SK-N-SH (cell line): ENCODE measurements at regions of chr11 and their contacts with region 1.

Region 1: DNA sequence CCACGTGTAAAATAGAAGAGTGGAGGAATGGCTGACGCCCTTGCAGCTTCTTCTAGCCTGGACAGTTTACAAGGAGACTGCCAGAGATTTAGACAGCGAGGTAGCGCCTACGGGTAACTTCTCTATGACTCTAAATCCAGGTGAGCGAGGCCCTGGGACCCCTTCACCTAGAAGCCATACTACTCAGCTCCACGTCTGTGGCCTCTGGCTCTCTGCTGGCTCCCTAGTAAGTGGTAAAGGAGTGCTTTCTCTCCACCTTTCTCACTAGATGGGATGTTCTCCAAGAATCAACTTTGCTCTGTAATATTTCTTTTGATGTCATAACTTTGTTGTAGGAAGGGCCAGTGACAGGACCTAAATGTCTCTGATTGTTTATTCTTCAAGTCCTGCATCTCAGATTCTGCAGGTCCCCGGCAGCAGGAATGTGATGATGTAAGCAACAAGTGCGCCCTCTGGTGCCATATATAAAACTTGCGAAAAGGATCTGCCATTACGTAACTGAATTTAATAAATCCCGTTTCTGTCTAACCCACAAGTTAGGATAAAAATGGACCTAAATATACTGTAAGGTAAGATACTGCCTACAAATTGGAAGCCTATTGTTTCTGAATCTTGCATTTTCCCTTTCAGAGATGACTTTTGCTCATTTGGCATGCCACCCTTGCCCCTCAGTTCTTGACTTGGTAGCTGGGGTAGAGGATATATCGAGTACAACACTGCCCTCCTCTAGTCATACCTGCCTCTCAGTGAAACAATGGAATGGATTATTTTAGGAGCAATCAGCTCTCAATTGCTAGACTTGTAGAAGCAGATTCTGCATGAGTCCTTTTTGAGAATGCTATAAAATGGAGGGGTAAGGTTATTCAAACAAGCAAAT is 11.0 kb upstream of the PTPN5 start:
- DNase-seq: peak; percentile 62
- H3K4me3 ChIP-seq: no peak overlapping the region
- H3K27ac ChIP-seq: no peak overlapping the region
- H3K4me1 ChIP-seq: 0 out of 4 replicates have a peak, but pooled peaks cover 0 to 2% of the 10 kb centered on the region in 2 experiments
- H3K27me3 ChIP-seq: peaks cover 4% of the 10 kb centered on the region; the same call in 1 of the 2 replicates
- CTCF ChIP-seq: peak; percentile 78
- EP300 ChIP-seq: no peak
- RAD21 ChIP-seq: peak; percentile 76

Region 2: DNA sequence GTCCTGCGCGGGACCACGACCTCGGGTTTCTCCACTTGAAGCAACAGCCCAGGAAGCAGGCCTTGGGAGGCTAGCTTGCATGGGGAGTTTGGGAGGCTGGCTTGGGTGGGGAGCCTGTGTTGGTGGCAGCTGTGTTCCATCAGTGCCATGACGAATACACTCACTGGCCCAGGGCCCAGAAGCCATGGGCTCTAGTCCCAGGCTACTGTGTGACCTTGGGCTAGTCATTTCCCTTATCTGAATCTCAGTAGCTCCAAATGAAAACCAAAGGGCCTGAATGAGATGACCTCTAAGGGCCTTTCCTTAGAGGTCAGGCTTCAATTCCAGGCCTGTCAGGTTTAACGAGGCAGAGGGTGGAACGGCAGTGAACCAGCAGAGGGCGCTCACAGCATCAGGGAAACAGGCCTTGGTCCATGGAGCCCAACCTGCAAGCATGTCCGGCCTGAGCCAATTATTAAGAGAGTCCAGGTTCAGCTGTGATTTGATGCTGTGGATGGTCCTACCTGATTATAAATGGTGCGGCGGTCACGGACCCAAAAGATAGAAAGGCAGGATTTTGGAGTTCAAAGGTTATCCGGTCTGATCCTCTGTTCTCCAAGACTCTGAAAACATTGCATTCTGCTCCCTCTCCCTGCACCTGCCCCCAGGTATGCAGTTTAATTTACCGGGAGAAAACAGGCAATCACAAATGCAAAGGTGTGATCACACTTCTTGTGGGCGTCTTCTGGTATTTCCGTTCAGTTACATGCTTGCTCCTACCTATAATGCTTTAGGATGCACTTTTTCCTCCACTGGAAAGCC is 26.9 kb before region 1 on chr11:
- CTCF ChIA-PET with region 1: interaction called, 185 read pairs
- POLR2A ChIA-PET with region 1: no interaction called
- DNase-seq: peak; percentile 76
- H3K4me3 ChIP-seq: peak overlapping the region in 1 of 2 experiments; percentile 31; a peak in 1 of 4 replicates
- H3K27ac ChIP-seq: no peak overlapping the region
- H3K4me1 ChIP-seq: peaks cover 0 to 3% of the 10 kb centered on the region in 2 experiments; a peak in 1 of 4 replicates
- H3K27me3 ChIP-seq: no peaks in the 10 kb centered on the region; the same call in 1 of the 2 replicates
- CTCF ChIP-seq: peak; percentile 80
- EP300 ChIP-seq: no peak
- RAD21 ChIP-seq: peak; percentile 74

Region 3: GRCh38 chr11:18785411-18785810 is 17.2 kb before region 1 on chr11:
- CTCF ChIA-PET with region 1: interaction called, 185 read pairs
- POLR2A ChIA-PET with region 1: no interaction called
- DNase-seq: peak; percentile 48
- H3K4me3 ChIP-seq: no peak overlapping the region
- H3K27ac ChIP-seq: no peak overlapping the region
- H3K4me1 ChIP-seq: no peaks in the 10 kb centered on the region; a peak in 1 of 4 replicates
- H3K27me3 ChIP-seq: peaks cover 13% of the 10 kb centered on the region; the same call in 1 of the 2 replicates
- CTCF ChIP-seq: no peak
- EP300 ChIP-seq: no peak
- RAD21 ChIP-seq: no peak

Region 4: DNA sequence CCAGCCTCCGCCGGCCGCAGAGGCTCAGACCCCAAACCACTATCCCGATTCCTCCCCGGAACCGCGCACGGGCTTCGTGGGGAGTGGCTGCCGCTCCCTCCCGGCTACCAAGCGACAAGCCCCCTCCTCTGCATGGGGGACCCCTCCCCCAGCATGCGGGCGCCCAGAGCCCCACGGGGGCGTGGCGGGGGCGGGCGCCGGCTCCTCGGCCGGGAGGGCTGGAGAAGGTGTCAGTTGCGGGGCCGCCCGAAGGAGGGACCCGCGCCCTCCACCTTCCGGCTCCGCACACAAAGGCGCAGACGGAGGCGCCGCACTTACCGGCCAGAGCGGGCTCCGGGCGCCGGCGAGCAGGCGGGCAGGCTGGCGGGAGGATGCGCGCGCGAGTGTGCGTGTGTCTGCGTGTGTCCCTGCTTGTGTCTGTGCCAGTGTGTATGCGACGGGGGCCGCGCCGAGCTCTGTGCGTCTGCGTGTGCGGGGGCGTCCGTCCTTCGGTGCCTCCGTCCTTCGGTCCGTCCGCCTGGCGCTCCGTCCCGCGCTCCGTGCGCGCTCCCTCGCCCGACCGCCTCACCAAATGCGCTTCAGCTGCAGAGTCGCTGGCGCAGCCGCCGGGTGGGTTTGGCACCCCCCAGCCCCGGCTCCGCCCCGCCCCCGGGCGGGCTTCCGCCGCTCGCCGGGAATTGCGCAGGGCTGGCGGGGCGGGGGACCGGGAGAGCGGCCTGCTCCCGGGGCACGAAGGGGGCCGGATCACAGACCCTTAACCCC is 11.2 kb before region 1 on chr11 and contains the start of gene PTPN5:
- CTCF ChIA-PET with region 1: interaction called, 23 read pairs
- POLR2A ChIA-PET with region 1: no interaction called
- DNase-seq: peak; percentile 66
- H3K4me3 ChIP-seq: peak within 1 kb of the TSS; percentile 39 to 48; a peak in 3 of 4 replicates
- H3K27ac ChIP-seq: no peak within 1 kb of the TSS
- H3K4me1 ChIP-seq: peaks cover 0 to 2% of the 10 kb centered on the region in 2 experiments; a peak in 1 of 4 replicates
- H3K27me3 ChIP-seq: peaks cover 50% of the 10 kb centered on the region
- CTCF ChIP-seq: no peak
- EP300 ChIP-seq: no peak
- RAD21 ChIP-seq: no peak
- polyA plus RNA-seq, gene PTPN5: not detected in 2 replicates